Activated CD4-positive, alpha-beta T cell treated with anti-CD3 and anti-CD28 coated beads, Interleukin-2, amount 10 ng/mL, durations not matched to agents 24 days and 14 days (primary cell): ENCODE measurements at regions of chr5 and their contacts with region 1.

Region 1: GRCh38 chr5:40813698-40814281 is 15.6 kb upstream of the PRKAA1 start:
- DNase-seq: no peak
- H3K4me3 Mint-ChIP-seq: no peak overlapping the region
- H3K27ac Mint-ChIP-seq: peak overlapping the region; percentile 73
- H3K4me1 Mint-ChIP-seq: peaks cover 9% of the 10 kb centered on the region
- H3K27me3 Mint-ChIP-seq: no peaks in the 10 kb centered on the region

Region 2: GRCh38 chr5:40714001-40714400 is 99.8 kb before region 1 on chr5:
- intact Hi-C with region 1: no loop called
- DNase-seq: no peak
- H3K4me3 Mint-ChIP-seq: no peak overlapping the region
- H3K27ac Mint-ChIP-seq: no peak overlapping the region
- H3K4me1 Mint-ChIP-seq: peaks cover 2% of the 10 kb centered on the region
- H3K27me3 Mint-ChIP-seq: no peaks in the 10 kb centered on the region

Region 3: DNA sequence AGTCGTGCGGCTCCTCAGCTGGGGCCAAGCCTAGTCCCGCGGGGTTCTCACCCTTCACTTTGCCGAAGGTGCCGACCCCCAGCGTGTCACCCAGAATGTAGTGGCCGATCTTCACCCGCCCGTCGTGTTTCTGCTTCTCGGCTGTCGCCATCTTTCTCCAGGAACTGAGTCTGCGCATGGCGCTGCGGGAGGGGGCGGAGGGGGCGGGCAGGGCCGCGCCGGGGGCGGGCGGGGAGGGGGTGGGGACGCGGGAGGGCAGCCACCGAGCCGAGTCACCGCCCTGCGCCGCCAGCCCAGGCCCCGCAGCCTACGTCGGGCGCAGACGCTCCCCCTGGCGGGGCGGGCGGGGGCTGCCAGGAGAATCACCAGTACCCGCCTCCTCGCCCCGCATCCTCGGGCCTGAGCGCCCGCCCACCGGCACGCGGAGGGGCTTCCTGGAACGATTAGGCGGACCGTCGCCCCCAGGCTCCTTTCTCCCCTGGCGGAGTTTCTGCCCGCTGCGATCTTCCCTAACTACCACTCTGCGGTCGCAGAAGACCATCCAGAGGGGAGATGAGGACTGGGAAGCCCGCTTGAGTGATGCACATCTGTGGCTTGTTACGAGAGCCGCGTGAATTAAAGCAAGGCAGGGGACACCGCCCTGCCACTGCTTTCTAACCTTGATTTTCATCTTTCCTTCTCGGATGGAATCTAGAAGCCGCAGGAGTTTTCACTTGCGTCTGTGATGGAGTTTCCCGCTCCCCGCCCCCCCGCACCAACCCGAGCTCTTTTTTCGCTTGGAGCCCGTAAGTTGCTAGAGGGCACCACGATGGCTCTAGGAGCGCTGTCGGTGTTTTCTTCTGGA is 15.6 kb before region 1 on chr5 and contains the start of gene PRKAA1:
- intact Hi-C with region 1: loop called (anchors 1 kb)
- DNase-seq: peak; percentile 97
- H3K4me3 Mint-ChIP-seq: peak within 1 kb of the TSS; percentile 88
- H3K27ac Mint-ChIP-seq: peak within 1 kb of the TSS; percentile 97
- H3K4me1 Mint-ChIP-seq: peaks cover 36% of the 10 kb centered on the region
- H3K27me3 Mint-ChIP-seq: peaks cover 15% of the 10 kb centered on the region
- total RNA-seq, gene PRKAA1: 44.8 and 49.1 TPM in 2 replicates